Right cardiac atrium (tissue), 5 donors: ENCODE measurements at regions of chr11 and their contacts with region 1.

Region 1: GRCh38 chr11:11430431-11430830 is 77.4 kb upstream of the CSNK2A3 start:
- DNase-seq: no peak
- ATAC-seq: no peak
- H3K4me3 ChIP-seq: no peak overlapping the region
- H3K27ac ChIP-seq: no peak overlapping the region
- H3K4me1 ChIP-seq: peaks cover 19% of the 10 kb centered on the region
- H3K27me3 ChIP-seq: no peaks in the 10 kb centered on the region

Region 2: DNA sequence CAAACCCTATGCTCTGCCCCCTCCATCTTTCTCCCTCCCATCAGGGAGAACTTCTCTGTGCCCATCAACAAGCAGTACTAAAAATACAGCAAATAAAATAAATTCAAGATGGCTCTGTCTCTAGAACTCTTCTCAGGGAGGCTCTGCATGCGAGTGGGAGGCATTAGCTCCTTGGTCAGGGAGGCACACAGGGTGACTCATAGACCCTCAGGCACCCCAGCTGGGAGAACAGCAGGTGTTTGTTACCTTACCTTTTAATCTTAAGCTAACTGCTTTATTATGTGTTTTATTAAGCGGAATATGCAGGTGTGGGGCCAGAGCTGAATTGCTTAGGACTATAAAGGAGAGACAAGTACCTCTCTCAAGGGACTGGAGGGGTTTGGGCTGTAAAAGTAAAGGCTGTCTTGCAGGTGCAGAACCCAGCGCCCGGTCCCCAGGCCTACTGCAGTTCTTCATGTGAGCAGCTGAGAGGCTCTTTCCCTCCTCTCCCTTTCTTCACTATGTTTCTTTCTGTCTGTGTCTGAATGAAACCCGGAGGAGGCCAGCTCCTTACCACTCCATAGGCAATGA is 98.2 kb before region 1 on chr11:
- intact Hi-C with region 1: no loop called
- DNase-seq: no peak
- ATAC-seq: no peak
- H3K4me3 ChIP-seq: no peak overlapping the region
- H3K27ac ChIP-seq: no peak overlapping the region
- H3K4me1 ChIP-seq: no peaks in the 10 kb centered on the region
- H3K27me3 ChIP-seq: no peaks in the 10 kb centered on the region

Region 3: DNA sequence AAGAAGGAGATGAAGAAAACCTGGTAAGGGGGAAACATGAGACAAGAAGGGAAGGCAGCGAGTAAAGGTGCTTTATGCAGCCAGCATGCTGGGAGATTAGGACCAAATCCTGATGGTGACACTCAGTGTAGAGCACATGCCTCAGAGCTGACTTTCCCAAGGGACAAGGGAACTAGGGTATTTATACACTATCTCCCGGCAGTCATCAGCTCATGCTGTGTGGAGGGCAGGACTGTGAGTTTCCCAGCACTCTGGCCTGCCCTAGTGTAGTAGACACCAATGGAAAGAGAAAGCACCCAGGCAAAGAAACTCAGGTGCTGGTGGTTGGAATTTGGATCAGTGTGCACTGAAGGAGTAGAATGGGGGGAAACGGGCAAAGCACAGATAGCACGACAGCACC is 50.9 kb after region 1 on chr11:
- intact Hi-C with region 1: loop called in 1 of 4 experiments (anchors 5 kb)
- DNase-seq: no peak
- ATAC-seq: peak; percentile 87 to 88
- H3K4me3 ChIP-seq: no peak overlapping the region
- H3K27ac ChIP-seq: peak overlapping the region; percentile 61
- H3K4me1 ChIP-seq: peaks cover 11% of the 10 kb centered on the region
- H3K27me3 ChIP-seq: no peaks in the 10 kb centered on the region